Activated T-helper 1 cell treated with anti-CD3 and anti-CD28 coated beads, Interleukin-12 subunit alpha, Interleukin-12 subunit beta, Interleukin-2, Interleukin-4 antibody, amounts not matched to agents 30 ng/mL and 10 ng/mL and 1 ng/mL, durations not matched to agents 14 hours and 24 hours and 36 hours (primary cell): ENCODE measurements at regions of chr2 and their contacts with region 1.

Region 1: GRCh38 chr2:181891966-181892798 is 652 bp downstream of the ITPRID2 start:
- DNase-seq: peak; percentile 57
- H3K4me3 Mint-ChIP-seq: peak overlapping the region; percentile 93
- H3K27ac Mint-ChIP-seq: peak overlapping the region; percentile 87
- H3K4me1 Mint-ChIP-seq: peaks cover 42% of the 10 kb centered on the region
- H3K27me3 Mint-ChIP-seq: peaks cover 19% of the 10 kb centered on the region

Region 2: DNA sequence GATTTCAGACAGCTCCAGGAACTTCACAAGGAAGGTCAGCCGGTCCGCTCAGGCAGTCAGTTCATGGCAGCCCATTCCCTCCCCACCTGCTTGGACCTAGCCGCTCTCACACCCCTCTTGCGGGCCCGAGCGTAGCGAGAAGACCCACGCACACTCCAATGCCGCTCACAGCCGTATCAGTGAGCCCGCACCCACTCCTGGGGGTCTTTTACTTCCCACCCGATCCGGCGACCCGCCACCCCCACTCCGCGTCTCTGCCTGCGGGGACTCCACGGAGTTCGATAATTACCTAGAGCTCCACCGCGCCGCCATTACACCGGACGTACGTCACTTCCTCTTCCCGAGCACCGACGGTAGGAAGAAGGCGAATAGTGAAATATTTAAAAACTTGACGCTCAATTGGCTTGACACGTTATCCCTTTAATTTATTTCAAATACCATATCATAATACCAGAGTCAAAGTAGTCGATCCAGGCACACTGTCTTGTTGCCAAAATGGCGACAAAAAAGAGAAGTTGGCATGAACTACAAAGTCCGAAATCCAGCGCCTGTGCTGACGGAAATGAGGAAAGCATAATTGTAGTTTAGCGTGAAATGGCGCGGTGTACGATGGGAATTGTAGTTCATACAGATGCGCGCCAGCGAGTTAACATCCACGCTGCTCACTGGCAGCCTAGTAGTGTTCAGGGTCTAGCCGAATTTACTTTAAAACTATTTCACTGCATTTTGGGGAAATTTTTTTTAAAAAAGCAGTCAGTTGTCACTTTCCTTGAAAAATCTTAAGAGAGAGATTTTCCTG is 1885.2 kb before region 1 on chr2 and contains the start of gene CWC22:
- intact Hi-C with region 1: loop called (anchors 5 kb)
- DNase-seq: peak; percentile 79
- H3K4me3 Mint-ChIP-seq: peak within 1 kb of the TSS; percentile 94
- H3K27ac Mint-ChIP-seq: peak within 1 kb of the TSS; percentile 97
- H3K4me1 Mint-ChIP-seq: peaks cover 26% of the 10 kb centered on the region
- H3K27me3 Mint-ChIP-seq: no peaks in the 10 kb centered on the region
- total RNA-seq, gene CWC22: 29.6 and 30.9 TPM in 2 replicates

Region 3: GRCh38 chr2:181312515-181312927 is 579.7 kb before region 1 on chr2:
- intact Hi-C with region 1: loop called (anchors 5 kb)
- DNase-seq: peak; percentile 44
- H3K4me3 Mint-ChIP-seq: peak overlapping the region; percentile 84
- H3K27ac Mint-ChIP-seq: peak overlapping the region; percentile 99
- H3K4me1 Mint-ChIP-seq: peaks cover 60% of the 10 kb centered on the region
- H3K27me3 Mint-ChIP-seq: no peaks in the 10 kb centered on the region

Region 4: DNA sequence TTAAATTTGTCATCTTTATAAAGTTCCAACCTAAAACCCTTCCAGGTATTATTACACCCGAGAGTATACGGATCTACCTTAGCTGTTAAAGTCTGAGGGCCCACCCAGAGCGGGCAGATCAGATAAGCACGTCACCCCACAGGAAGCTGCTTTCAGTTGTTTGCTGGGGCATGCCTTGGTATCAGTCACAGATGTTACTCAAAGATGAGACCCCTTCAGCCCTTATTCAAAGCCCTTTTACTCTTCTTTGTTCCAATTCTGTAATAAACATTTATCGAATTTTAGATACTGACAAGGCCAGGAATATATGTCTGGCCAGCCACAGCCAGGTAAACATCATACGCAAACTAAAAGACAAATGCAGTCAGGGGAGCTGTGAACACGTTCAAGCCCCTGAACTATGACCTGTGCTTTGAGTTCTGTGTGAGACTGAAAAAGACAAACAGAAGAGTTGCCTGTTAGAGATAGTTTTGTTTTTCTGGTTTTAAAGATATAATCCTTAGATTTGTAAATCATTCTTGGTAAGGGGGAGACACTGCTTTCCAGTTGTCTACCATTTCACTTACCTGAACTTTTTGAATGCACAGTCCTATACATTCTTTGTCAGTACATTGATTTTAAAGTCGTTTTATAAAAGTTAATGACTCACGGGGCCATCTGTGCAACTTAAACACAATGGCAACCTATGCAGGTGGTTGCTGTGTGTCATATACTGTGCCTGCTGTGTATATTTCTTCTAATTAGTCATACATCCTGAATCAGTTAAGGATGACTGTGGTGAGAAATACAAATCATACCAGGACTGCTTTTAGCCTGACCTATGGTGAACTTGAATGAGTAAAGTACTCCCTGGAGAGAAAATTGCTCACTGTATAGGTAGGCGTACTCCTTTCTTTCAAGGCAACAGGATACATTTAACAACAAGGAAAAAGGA is 101.2 kb before region 1 on chr2:
- intact Hi-C with region 1: loop called (anchors 1 kb)
- DNase-seq: peak; percentile 3
- H3K4me3 Mint-ChIP-seq: no peak overlapping the region
- H3K27ac Mint-ChIP-seq: peak overlapping the region; percentile 38
- H3K4me1 Mint-ChIP-seq: peaks cover 33% of the 10 kb centered on the region
- H3K27me3 Mint-ChIP-seq: no peaks in the 10 kb centered on the region

Region 5: DNA sequence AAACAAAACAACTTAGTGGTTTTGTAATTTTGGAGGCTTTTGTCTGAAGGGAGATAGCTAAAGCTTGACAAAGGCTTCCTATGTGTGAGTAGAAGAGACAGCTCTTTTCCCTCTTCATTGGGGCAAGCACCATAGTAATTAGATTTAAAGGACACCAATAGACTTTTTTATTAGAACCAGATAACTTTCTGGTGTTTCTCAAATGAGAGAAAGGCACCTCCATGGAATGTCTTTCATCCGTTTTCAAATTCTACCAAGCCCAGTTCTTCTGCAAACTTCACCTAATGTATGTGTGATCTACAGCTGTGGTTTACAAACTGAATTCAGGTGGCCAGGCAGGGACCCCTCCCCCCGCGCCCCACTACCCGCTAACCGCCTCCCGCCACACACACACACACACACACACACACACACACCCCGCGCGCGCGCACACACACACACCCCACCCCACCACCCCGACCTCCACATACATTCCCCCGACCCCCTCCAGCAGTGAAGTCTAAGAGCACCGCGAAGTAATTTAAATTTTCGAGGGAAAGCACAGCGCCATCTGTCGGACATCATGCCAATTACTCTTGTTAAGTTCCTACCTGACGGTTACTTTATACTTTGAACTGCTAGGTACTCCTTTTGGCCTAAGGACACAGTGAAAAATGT is 61.8 kb after region 1 on chr2:
- intact Hi-C with region 1: loop called (anchors 2 kb)
- DNase-seq: peak; percentile 38
- H3K4me3 Mint-ChIP-seq: peak overlapping the region; percentile 47
- H3K27ac Mint-ChIP-seq: no peak overlapping the region
- H3K4me1 Mint-ChIP-seq: peaks cover 21% of the 10 kb centered on the region
- H3K27me3 Mint-ChIP-seq: peaks cover 24% of the 10 kb centered on the region

Region 6: GRCh38 chr2:183078465-183079138 is 1186.4 kb after region 1 on chr2 and contains the start of gene DUSP19:
- intact Hi-C with region 1: loop called (anchors 10 kb)
- DNase-seq: peak; percentile 78
- H3K4me3 Mint-ChIP-seq: peak within 1 kb of the TSS; percentile 91
- H3K27ac Mint-ChIP-seq: peak within 1 kb of the TSS; percentile 41
- H3K4me1 Mint-ChIP-seq: peaks cover 15% of the 10 kb centered on the region
- H3K27me3 Mint-ChIP-seq: peaks cover 7% of the 10 kb centered on the region
- total RNA-seq, gene DUSP19: 1.0 and 1.7 TPM in 2 replicates